Endothelial cell of umbilical vein (primary cell): ENCODE measurements at regions of chr11 and their contacts with region 1.

Region 1: GRCh38 chr11:62645956-62646824 is at the start of gene GANAB:
- DNase-seq: peak; percentile 97
- H3K4me3 ChIP-seq: peak within 1 kb of the TSS; percentile 62 to 87 (median 65)
- H3K27ac ChIP-seq: peak within 1 kb of the TSS; percentile 80
- H3K4me1 ChIP-seq: peaks cover 11% of the 10 kb centered on the region
- H3K27me3 ChIP-seq: no peaks in the 10 kb centered on the region
- CTCF ChIP-seq: no peak
- POLR2A ChIP-seq: peak; percentile 97
- total RNA-seq, gene GANAB: 357 and 389 TPM in 2 replicates

Region 2: GRCh38 chr11:62573592-62574362 is 72.4 kb before region 1 on chr11 and contains the start of gene EEF1G:
- CTCF ChIA-PET with region 1: no interaction called
- POLR2A ChIA-PET with region 1: interaction called, 3 read pairs
- dilution Hi-C with region 1: no loop called
- intact Hi-C with region 1: loop called (anchors 1 kb)
- DNase-seq: peak; percentile 100
- H3K4me3 ChIP-seq: peak within 1 kb of the TSS; percentile 51 to 85 (median 70)
- H3K27ac ChIP-seq: peak within 1 kb of the TSS; percentile 99
- H3K4me1 ChIP-seq: peaks cover 59% of the 10 kb centered on the region
- H3K27me3 ChIP-seq: no peaks in the 10 kb centered on the region
- CTCF ChIP-seq: no peak
- POLR2A ChIP-seq: peak; percentile 96
- total RNA-seq, gene EEF1G: 1,341 and 1,345 TPM in 2 replicates

Region 3: DNA sequence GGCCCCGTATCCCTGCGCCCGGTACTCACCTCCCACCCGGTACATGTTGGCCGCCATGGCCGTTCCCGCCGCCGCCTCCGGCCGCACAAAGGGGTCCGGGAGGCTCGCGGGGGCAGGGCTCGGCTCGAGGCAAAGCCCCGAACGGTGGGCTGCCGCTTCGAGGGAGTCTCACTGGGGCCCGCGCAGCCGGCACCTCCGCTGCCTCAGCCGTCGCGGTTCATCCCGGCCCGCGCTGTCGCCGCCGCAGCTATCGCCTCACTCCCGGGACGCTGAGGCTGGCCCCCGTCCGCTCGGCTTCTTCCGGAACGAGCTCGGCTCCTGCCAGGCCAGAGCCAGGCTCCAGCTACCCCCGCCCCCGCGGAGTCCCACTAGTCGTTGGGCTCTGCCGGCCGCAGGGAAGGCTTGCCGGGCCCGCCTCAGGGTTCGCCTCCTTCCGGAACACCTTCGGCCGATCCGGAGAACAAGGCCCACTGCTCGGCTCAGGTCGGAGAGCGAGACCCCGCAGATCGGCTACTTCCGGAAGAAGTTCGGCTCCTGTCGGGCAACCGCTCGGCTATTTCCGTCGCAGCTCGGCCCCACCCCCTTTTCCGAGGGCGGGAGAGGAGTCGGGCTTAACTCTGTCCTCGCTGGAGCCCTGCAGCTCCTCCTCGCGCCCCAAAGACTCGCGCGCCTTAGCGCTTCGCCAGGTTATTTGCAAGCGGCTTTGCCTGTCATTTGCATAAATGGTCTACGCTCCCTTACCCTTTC is 44.6 kb before region 1 on chr11 and contains the start of gene MTA2:
- CTCF ChIA-PET with region 1: interaction called, 3 read pairs
- POLR2A ChIA-PET with region 1: interaction called, 3 read pairs
- dilution Hi-C with region 1: no loop called
- intact Hi-C with region 1: loop called (anchors 1 kb)
- DNase-seq: peak; percentile 99
- H3K4me3 ChIP-seq: peak within 1 kb of the TSS; percentile 61 to 98 (median 92)
- H3K27ac ChIP-seq: peak within 1 kb of the TSS; percentile 54
- H3K4me1 ChIP-seq: peaks cover 19% of the 10 kb centered on the region
- H3K27me3 ChIP-seq: no peaks in the 10 kb centered on the region
- CTCF ChIP-seq: no peak
- POLR2A ChIP-seq: peak; percentile 75
- total RNA-seq, gene MTA2: 166 and 176 TPM in 2 replicates

Region 4: DNA sequence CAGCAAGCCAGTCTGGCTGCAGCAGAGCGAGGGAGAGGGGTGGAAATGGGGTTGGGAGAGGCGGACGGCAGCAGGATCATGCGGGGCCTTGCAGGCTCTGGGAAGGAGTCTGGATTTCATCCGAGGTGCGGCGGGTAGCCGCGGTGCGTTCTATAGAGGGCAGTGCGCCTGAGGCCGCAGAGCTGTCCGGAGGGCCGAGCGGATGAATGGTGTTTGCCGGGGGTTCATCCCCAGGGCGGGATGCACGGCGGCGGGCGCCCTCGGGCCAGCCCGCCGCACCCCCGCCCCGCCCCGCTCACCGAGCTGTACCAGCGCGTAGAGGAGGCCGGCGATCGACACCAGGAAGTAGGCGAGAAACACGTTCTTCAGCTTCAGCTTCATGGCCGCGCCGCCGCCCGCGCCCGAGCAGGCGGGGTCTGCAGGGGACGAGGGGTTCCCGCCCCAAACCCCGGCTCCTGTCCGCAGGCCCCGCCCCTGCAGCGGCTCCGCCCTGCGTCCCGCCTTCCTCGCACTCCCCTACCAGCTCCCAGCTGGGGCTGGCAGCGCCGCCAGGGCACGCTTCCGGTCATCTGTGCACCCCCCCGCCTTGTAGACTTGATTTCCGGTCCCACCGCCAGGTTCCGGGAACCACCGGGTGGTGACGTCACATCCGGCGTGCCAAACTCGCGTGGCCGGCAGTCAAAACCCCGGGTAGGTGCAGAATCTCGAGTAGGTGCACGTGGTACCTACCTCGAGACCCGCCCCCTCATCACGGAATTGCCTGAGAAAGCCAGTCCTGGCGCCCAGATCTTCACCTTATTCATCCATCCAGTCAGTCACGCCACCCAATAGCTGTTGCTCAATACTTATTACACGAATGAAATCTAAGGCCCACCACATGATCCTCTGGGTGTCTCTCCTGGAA is 24.4 kb before region 1 on chr11 and contains the start of gene B3GAT3:
- CTCF ChIA-PET with region 1: no interaction called
- POLR2A ChIA-PET with region 1: interaction called, 5 read pairs
- dilution Hi-C with region 1: no loop called
- intact Hi-C with region 1: loop called (anchors 1 kb)
- DNase-seq: peak; percentile 96
- H3K4me3 ChIP-seq: peak within 1 kb of the TSS; percentile 14 to 80 (median 66)
- H3K27ac ChIP-seq: peak within 1 kb of the TSS; percentile 88
- H3K4me1 ChIP-seq: peaks cover 15% of the 10 kb centered on the region
- H3K27me3 ChIP-seq: no peaks in the 10 kb centered on the region
- CTCF ChIP-seq: no peak
- POLR2A ChIP-seq: peak; percentile 95
- total RNA-seq, gene B3GAT3: 31.6 and 35.0 TPM in 2 replicates